ENCODE measurements at regions of chr17 and their contacts with region 1.

Region 1: DNA sequence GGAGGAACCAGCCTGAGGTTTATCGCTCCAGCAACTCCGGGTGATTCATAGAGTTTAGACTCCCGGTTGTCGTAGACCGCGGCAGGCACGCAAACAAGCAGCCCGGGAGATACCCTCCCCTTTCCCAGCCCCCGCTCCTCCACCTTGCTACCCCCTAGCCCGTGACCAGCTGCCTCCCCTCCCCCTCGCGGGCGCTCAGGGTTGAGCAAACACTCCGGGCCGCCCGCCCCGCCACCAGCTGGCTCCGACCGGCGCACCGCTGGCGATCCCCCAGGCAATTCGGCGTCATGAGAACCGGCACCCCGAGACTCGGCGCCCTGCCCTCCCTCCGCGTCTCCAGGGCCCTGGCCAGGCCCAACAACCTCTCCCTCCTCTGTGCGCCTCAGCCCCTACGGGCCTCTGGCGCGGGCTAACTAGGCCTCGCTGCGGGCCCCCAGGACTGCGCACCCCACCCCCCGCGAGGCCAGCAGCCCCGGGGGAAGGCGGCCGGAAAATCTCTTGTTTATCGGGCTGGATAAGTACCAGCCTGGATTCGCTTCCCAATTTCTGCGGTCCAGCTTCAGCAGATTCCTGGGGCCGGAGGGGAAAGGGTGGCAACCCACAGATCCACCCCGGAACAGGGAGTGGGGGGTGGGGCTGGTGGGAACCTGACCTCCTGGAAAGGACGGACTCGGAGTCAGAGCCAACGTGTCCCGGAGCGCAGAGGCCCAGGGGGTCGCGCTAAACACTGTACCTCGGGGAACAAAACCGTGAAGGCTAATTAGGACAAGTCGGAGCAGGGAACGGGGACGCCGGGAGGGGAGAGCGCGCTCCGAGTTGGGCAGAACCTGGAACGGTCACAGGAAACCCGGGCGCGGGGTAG is 951 bp upstream of the GPRC5C start:
- DNase-seq: peak; percentile 87 to 88
- H3K4me3 ChIP-seq: peak overlapping the region; percentile 50
- H3K4me3 Mint-ChIP-seq: peak overlapping the region; percentile 99
- H3K27ac Mint-ChIP-seq: peak overlapping the region; percentile 97
- H3K4me1 ChIP-seq: peaks cover 43% of the 10 kb centered on the region
- H3K4me1 Mint-ChIP-seq: peaks cover 27% of the 10 kb centered on the region
- H3K27me3 ChIP-seq: no peaks in the 10 kb centered on the region
- H3K27me3 Mint-ChIP-seq: no peaks in the 10 kb centered on the region
- CTCF ChIP-seq: no peak

Region 2: DNA sequence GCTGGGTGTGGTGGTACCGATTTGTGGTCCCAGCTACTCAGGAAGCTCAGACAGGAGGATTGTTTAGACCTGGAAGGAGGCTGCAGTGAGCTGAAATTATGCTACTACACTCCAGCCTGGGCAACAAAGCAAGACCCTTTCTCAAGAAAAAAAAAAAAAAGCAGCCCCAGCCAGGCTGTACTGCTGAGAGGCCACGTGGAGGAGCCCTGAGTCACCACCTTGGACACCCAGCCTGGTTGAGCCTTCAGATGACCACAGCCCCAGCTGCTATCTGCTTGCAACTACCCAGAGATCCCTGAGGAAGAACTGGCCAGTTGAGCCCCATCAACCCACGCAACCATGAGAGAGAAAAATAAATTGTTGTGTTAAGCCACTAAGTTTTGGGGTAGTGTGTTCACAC is 22.7 kb before region 1 on chr17:
- CTCF ChIA-PET with region 1: no interaction called
- POLR2A ChIA-PET with region 1: interaction called, 3 read pairs
- intact Hi-C with region 1: loop called (anchors 2 kb)
- DNase-seq: peak; percentile 73 to 80
- H3K4me3 ChIP-seq: no peak overlapping the region
- H3K4me3 Mint-ChIP-seq: no peak overlapping the region
- H3K27ac Mint-ChIP-seq: no peak overlapping the region
- H3K4me1 ChIP-seq: peaks cover 5% of the 10 kb centered on the region; the same call in 1 of the 2 replicates
- H3K4me1 Mint-ChIP-seq: peaks cover 6% of the 10 kb centered on the region
- H3K27me3 ChIP-seq: no peaks in the 10 kb centered on the region
- H3K27me3 Mint-ChIP-seq: no peaks in the 10 kb centered on the region
- CTCF ChIP-seq: peak in 1 of 2 experiments; percentile 64

Region 3: DNA sequence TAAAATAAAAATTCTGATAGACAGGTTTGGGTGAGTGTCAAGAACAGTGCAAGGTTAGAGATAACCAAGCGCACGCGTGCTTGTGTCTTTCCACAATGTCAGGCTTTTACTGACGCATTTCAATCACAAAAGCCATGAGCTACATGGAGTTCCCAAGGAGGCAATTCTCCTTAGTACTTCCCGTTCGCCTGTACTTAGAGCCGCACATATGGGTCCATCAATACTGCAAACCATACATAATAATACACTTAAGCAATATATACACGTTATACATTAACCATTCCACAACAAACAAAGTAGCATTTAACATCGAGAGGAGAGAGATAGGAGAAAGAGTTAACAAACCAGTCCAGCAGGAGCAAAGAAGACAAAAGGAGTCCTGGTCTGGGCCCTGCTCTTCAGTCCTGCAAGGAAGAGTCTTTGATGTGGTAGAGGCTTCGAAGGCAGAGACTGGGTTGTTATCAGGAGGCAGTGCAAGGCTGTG is 11.0 kb before region 1 on chr17:
- CTCF ChIA-PET with region 1: interaction called, 6 read pairs
- POLR2A ChIA-PET with region 1: interaction called, 3 read pairs
- intact Hi-C with region 1: loop called (anchors 1 kb)
- DNase-seq: peak; percentile 73 to 74
- H3K4me3 ChIP-seq: no peak overlapping the region
- H3K4me3 Mint-ChIP-seq: peak overlapping the region; percentile 40
- H3K27ac Mint-ChIP-seq: peak overlapping the region; percentile 64
- H3K4me1 ChIP-seq: peaks cover 44% of the 10 kb centered on the region
- H3K4me1 Mint-ChIP-seq: peaks cover 24% of the 10 kb centered on the region
- H3K27me3 ChIP-seq: no peaks in the 10 kb centered on the region
- H3K27me3 Mint-ChIP-seq: no peaks in the 10 kb centered on the region
- CTCF ChIP-seq: no peak

Region 4: DNA sequence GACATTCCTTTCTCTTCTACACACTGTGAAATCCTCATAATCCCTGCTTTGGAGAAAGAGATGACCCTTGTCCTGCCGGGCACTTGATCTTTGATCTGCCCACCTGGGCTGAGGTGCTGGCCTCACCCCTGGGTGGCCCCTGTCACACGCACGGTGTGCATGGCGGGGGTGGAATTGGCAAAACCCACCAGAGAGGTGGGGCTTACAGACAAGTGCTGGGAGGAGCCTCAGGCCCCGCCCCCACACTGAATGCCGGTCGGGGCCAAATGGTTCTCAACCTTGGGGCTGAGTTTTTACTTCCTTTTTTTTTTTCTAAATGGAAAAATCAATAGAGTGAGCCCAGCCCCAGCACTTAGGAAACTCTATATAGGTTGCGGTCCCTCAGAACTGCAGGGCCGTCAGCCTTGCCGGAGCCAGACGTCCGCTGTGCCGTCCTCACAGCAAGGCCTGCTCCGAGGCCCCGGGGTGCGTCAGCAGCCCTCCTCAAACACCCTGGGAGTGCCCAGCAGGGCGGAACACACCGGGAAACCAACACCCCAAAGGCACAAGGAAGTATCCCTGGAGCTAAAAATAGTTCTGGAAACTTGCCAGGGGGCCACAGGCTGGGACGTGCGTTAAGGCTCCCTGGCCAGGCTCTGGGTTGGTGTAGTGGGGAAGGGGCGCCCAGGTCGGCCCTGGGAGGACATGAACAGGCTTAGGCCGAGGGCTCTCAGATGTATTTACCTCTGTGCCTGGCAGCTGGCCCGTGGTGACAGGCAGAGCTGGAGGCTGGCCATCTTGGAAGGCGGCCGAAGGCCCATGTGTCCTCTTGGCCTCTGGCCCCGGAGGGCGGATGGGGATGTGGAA is 12.0 kb after region 1 on chr17:
- CTCF ChIA-PET with region 1: interaction called, 3 read pairs
- POLR2A ChIA-PET with region 1: no interaction called
- intact Hi-C with region 1: loop called (anchors 1 kb)
- DNase-seq: peak; percentile 88 to 90
- H3K4me3 ChIP-seq: no peak overlapping the region
- H3K4me3 Mint-ChIP-seq: peak overlapping the region; percentile 59
- H3K27ac Mint-ChIP-seq: peak overlapping the region; percentile 91
- H3K4me1 ChIP-seq: peaks cover 18% of the 10 kb centered on the region
- H3K4me1 Mint-ChIP-seq: peaks cover 6% of the 10 kb centered on the region
- H3K27me3 ChIP-seq: no peaks in the 10 kb centered on the region
- H3K27me3 Mint-ChIP-seq: no peaks in the 10 kb centered on the region
- CTCF ChIP-seq: no peak

Region 5: GRCh38 chr17:74467221-74467951 is 36.4 kb after region 1 on chr17:
- CTCF ChIA-PET with region 1: no interaction called
- POLR2A ChIA-PET with region 1: no interaction called
- intact Hi-C with region 1: no loop called
- DNase-seq: no peak
- H3K4me3 ChIP-seq: no peak overlapping the region
- H3K4me3 Mint-ChIP-seq: no peak overlapping the region
- H3K27ac Mint-ChIP-seq: no peak overlapping the region
- H3K4me1 ChIP-seq: no peaks in the 10 kb centered on the region; the same call in 1 of the 2 replicates
- H3K4me1 Mint-ChIP-seq: no peaks in the 10 kb centered on the region
- H3K27me3 ChIP-seq: no peaks in the 10 kb centered on the region
- H3K27me3 Mint-ChIP-seq: peaks cover 4% of the 10 kb centered on the region
- CTCF ChIP-seq: no peak

Region 6: DNA sequence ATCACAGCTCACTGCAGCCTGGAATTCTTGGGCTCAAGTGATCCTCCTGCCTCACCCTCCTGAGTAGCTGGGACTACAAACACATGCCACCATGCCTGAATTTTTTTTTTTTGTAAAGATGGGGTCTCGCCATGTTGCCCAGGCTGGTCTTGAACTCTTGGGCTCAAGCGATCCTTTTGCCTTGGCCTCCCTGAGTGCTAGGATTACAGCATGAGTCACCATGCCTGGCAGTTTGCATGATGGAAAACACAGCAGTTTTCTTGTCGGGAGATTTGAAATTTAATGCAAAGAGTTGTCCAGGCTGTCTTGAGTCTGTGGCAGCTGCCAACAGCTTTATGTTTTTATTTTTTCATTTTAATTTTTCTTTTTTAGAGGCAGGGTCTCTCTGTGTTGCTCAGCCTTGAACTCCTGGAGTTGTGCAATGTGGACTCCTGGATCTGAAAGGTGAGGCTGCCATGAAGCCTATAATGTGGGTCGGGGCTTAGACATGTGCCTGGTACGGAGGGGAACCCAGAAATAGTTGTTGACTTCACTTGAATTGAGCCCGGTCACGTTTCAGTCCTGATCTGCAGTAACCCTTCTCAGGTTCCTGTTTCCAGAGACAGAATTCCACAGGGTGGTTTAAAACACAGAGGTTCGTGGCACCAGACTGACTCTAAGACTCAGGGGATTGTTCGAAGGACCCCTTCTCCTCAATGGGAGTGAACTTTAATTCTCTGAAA is 54.2 kb after region 1 on chr17:
- CTCF ChIA-PET with region 1: no interaction called
- POLR2A ChIA-PET with region 1: no interaction called
- intact Hi-C with region 1: no loop called
- DNase-seq: no peak
- H3K4me3 ChIP-seq: no peak overlapping the region
- H3K4me3 Mint-ChIP-seq: no peak overlapping the region
- H3K27ac Mint-ChIP-seq: no peak overlapping the region
- H3K4me1 ChIP-seq: no peaks in the 10 kb centered on the region
- H3K4me1 Mint-ChIP-seq: no peaks in the 10 kb centered on the region
- H3K27me3 ChIP-seq: no peaks in the 10 kb centered on the region
- H3K27me3 Mint-ChIP-seq: peaks cover 28% of the 10 kb centered on the region
- CTCF ChIP-seq: no peak